PC-3 (cell line): ENCODE measurements at regions of chr5 and their contacts with region 1.

Region 1: GRCh38 chr5:44952376-44952775 is 143.6 kb downstream of the MRPS30 start:
- DNase-seq: peak; percentile 74
- ATAC-seq: peak; percentile 63
- H3K4me3 ChIP-seq: no peak overlapping the region
- H3K27ac ChIP-seq: no peak overlapping the region
- H3K4me1 ChIP-seq: no peaks in the 10 kb centered on the region
- H3K27me3 ChIP-seq: no peaks in the 10 kb centered on the region
- CTCF ChIP-seq: peak; percentile 93

Region 2: GRCh38 chr5:45521067-45521466 is 568.7 kb after region 1 on chr5:
- CTCF ChIA-PET with region 1: interaction called, 3 read pairs
- POLR2A ChIA-PET with region 1: no interaction called
- intact Hi-C with region 1: loop called (anchors 2 kb)
- DNase-seq: peak; percentile 35
- ATAC-seq: peak; percentile 56; the same call in 1 of the 2 replicates
- H3K4me3 ChIP-seq: no peak overlapping the region
- H3K27ac ChIP-seq: no peak overlapping the region
- H3K4me1 ChIP-seq: no peaks in the 10 kb centered on the region
- H3K27me3 ChIP-seq: no peaks in the 10 kb centered on the region
- CTCF ChIP-seq: peak; percentile 56

Region 3: DNA sequence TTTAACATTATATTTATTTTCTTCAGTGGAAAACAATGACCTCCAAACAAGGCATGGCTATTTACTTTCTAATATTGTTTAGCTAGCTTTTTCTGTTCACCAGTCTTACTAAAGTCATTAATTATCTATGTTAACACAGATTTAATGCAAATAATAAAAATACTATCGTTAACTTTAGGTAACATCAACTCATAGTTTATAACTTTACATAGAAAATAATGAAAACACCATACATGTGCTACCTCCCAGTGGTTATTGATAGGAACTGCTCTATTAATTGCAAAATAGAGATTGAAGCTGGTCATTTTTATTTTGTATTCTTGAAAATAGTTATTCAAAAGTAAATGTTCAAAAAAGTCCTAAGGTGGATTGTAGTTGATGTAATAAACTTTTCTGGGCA is 822.2 kb after region 1 on chr5:
- CTCF ChIA-PET with region 1: no interaction called
- POLR2A ChIA-PET with region 1: no interaction called
- intact Hi-C with region 1: loop called (anchors 2 kb)
- DNase-seq: peak; percentile 40
- ATAC-seq: no peak
- H3K4me3 ChIP-seq: no peak overlapping the region
- H3K27ac ChIP-seq: no peak overlapping the region
- H3K4me1 ChIP-seq: no peaks in the 10 kb centered on the region
- H3K27me3 ChIP-seq: no peaks in the 10 kb centered on the region
- CTCF ChIP-seq: peak; percentile 74